GM12878 (cell line): ENCODE measurements at regions of chr9 and their contacts with region 1.

Region 1: DNA sequence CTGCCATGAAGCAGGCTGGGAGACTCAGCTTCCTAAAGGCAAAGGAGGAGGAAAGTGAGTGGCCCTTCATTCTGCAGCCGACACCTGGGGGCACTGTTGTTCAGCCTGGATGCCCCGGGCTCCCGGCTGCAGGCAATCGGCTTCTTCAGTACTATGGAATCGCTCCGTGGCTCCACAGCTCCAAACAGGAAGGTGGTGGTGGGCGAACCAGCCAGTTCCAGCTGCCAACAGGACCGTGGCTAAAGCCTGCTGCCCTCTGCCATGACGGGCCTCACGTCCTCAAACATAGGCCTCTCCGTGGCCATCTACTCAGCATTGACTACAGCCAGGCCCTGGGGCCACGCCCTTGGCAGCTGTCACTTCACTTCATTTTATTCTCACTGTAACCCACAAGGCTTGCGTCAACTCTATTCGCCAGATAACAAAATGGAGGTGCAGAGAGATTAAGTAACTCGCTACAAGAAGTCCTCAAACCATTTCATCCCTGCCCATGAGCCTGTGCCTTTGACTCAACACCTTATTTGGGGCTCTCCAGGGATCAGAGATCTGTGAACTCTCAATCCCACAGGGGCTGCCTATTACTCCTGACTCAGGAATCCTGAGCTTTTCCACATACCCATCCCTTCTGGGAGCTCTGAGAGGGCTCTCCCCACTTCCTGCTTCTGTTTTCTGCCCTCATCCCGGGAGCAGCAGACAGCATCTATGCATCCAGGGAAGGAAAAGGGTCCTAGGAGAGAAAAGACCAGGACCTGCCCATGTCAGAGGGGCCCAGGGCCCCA is 38.0 kb downstream of the PAX5 start:
- DNase-seq: no peak
- ATAC-seq: peak; percentile 55
- H3K4me3 ChIP-seq: peak overlapping the region; percentile 47
- H3K27ac ChIP-seq: peak overlapping the region; percentile 93
- H3K4me1 ChIP-seq: peaks cover 88% of the 10 kb centered on the region
- H3K27me3 ChIP-seq: no peaks in the 10 kb centered on the region
- CTCF ChIP-seq: peak; percentile 71 to 86 (median 86)
- EP300 ChIP-seq: no peak
- POLR2A ChIP-seq: peak; percentile 29; the same call in 1 of the 2 replicates
- RAD21 ChIP-seq: peak; percentile 85

Region 2: DNA sequence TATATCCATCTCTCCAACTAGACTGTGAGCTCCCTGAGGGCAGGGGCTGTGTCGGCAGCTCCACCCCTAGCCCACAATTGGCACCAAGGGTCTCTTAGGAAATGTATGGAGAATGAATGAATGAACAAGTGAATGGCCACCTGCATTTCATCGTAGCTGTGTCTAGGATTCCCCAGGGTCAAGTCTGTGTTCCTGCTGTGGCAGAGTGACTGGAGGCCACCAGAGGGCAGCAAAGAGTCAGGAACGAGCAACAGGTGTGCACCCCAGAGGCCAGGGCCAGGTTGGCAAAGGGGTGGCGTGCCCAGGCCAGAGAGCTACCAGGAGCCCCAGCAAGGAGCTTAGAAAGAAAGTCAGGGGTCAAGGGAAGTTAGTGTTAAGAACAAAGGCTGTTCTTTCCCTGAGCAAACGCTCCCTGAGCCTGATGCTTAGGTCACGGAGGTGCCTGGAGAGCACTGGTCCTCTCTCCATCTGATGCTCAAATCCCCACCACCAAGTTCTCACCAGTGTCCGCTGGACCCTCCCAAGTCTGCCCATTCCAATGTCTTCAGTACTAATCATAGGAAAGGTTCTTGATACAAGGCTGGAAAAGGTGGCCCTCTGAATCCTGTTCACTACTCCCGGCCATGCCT is 122.8 kb before region 1 on chr9:
- CTCF ChIA-PET with region 1: interaction called, 56 read pairs
- POLR2A ChIA-PET with region 1: no interaction called
- RAD21 ChIA-PET with region 1: interaction called, 37 read pairs
- SMC1A ChIA-PET with region 1: interaction called, 11 read pairs
- in situ Hi-C with region 1: no loop called
- intact Hi-C with region 1: loop called (anchors 1 kb)
- DNase-seq: peak; percentile 28
- ATAC-seq: peak; percentile 95
- H3K4me3 ChIP-seq: no peak overlapping the region
- H3K27ac ChIP-seq: no peak overlapping the region
- H3K4me1 ChIP-seq: peaks cover 27% of the 10 kb centered on the region
- H3K27me3 ChIP-seq: no peaks in the 10 kb centered on the region
- CTCF ChIP-seq: peak; percentile 86 to 91 (median 89); a peak in 5 of 6 replicates
- EP300 ChIP-seq: no peak
- POLR2A ChIP-seq: no peak
- RAD21 ChIP-seq: peak; percentile 86

Region 3: GRCh38 chr9:37027582-37028419 is 31.7 kb after region 1 on chr9:
- CTCF ChIA-PET with region 1: interaction called, 112 read pairs
- POLR2A ChIA-PET with region 1: interaction called, 354 read pairs
- RAD21 ChIA-PET with region 1: interaction called, 175 read pairs
- SMC1A ChIA-PET with region 1: interaction called, 30 read pairs
- in situ Hi-C with region 1: no loop called
- intact Hi-C with region 1: loop called (anchors 2 kb)
- DNase-seq: peak; percentile 85
- ATAC-seq: peak; percentile 78
- H3K4me3 ChIP-seq: peak overlapping the region; percentile 96
- H3K27ac ChIP-seq: peak overlapping the region; percentile 88
- H3K4me1 ChIP-seq: peaks cover 20% of the 10 kb centered on the region
- H3K27me3 ChIP-seq: no peaks in the 10 kb centered on the region
- CTCF ChIP-seq: no peak
- EP300 ChIP-seq: no peak
- POLR2A ChIP-seq: no peak
- RAD21 ChIP-seq: no peak

Region 4: DNA sequence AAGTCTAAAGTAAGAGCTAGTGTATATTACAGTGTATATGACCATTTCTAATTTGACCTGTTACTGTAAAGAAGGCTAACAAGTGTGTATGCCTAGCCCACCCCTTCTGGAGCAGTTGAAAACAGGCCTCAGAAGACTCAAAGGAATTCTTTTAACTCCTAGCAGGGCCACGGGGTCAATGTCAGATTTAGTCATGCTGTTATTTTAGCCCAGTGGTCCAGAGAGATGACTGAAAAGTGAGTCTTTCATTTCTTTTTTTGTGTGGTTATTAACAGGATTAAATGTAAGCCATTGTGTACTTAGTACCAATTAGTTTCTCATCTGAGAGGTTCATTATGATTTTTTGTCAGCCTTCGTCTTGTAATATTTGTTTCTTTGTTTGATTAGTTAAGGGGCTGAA is 148.6 kb after region 1 on chr9:
- CTCF ChIA-PET with region 1: interaction called, 5 read pairs
- POLR2A ChIA-PET with region 1: interaction called, 3 read pairs
- RAD21 ChIA-PET with region 1: interaction called, 14 read pairs
- SMC1A ChIA-PET with region 1: interaction called, 10 read pairs
- in situ Hi-C with region 1: no loop called
- intact Hi-C with region 1: loop called (anchors 2 kb)
- DNase-seq: peak; percentile 82
- ATAC-seq: peak; percentile 75
- H3K4me3 ChIP-seq: peak overlapping the region; percentile 9; the same call in 1 of the 2 replicates
- H3K27ac ChIP-seq: peak overlapping the region; percentile 82
- H3K4me1 ChIP-seq: peaks cover 18% of the 10 kb centered on the region; the same call in 1 of the 2 replicates
- H3K27me3 ChIP-seq: no peaks in the 10 kb centered on the region
- CTCF ChIP-seq: no peak
- EP300 ChIP-seq: peak; percentile 96 to 98
- POLR2A ChIP-seq: no peak
- RAD21 ChIP-seq: 0 out of 2 replicates have a peak, but pooled peaks have one; percentile 25

Region 5: GRCh38 chr9:37302277-37302676 is 306.2 kb after region 1 on chr9:
- CTCF ChIA-PET with region 1: interaction called, 15 read pairs
- POLR2A ChIA-PET with region 1: interaction called, 3 read pairs
- RAD21 ChIA-PET with region 1: interaction called, 11 read pairs
- SMC1A ChIA-PET with region 1: interaction called, 13 read pairs
- in situ Hi-C with region 1: no loop called
- intact Hi-C with region 1: loop called (anchors 5 kb)
- DNase-seq: peak; percentile 90
- ATAC-seq: peak; percentile 91
- H3K4me3 ChIP-seq: peak overlapping the region; percentile 43; the same call in 1 of the 2 replicates
- H3K27ac ChIP-seq: peak overlapping the region; percentile 95
- H3K4me1 ChIP-seq: peaks cover 48% of the 10 kb centered on the region
- H3K27me3 ChIP-seq: no peaks in the 10 kb centered on the region
- CTCF ChIP-seq: no peak
- EP300 ChIP-seq: peak; percentile 82 to 93
- POLR2A ChIP-seq: no peak
- RAD21 ChIP-seq: peak; percentile 31; the same call in 1 of the 2 replicates

Region 6: GRCh38 chr9:37408933-37409710 is 413.0 kb after region 1 on chr9:
- CTCF ChIA-PET with region 1: interaction called, 17 read pairs
- POLR2A ChIA-PET with region 1: interaction called, 5 read pairs
- RAD21 ChIA-PET with region 1: interaction called, 46 read pairs
- SMC1A ChIA-PET with region 1: interaction called, 10 read pairs
- in situ Hi-C with region 1: no loop called
- intact Hi-C with region 1: loop called (anchors 2 kb)
- DNase-seq: peak; percentile 100
- ATAC-seq: peak; percentile 76
- H3K4me3 ChIP-seq: peak overlapping the region; percentile 57; the same call in 1 of the 2 replicates
- H3K27ac ChIP-seq: peak overlapping the region; percentile 100
- H3K4me1 ChIP-seq: peaks cover 66% of the 10 kb centered on the region
- H3K27me3 ChIP-seq: no peaks in the 10 kb centered on the region
- CTCF ChIP-seq: peak in 2 of 3 experiments; percentile 11 to 16; a peak in 1 of 6 replicates
- EP300 ChIP-seq: peak; percentile 98 to 99
- POLR2A ChIP-seq: peak; percentile 85
- RAD21 ChIP-seq: no peak